ENCODE measurements at regions of chr14 and their contacts with region 1.

Region 1: DNA sequence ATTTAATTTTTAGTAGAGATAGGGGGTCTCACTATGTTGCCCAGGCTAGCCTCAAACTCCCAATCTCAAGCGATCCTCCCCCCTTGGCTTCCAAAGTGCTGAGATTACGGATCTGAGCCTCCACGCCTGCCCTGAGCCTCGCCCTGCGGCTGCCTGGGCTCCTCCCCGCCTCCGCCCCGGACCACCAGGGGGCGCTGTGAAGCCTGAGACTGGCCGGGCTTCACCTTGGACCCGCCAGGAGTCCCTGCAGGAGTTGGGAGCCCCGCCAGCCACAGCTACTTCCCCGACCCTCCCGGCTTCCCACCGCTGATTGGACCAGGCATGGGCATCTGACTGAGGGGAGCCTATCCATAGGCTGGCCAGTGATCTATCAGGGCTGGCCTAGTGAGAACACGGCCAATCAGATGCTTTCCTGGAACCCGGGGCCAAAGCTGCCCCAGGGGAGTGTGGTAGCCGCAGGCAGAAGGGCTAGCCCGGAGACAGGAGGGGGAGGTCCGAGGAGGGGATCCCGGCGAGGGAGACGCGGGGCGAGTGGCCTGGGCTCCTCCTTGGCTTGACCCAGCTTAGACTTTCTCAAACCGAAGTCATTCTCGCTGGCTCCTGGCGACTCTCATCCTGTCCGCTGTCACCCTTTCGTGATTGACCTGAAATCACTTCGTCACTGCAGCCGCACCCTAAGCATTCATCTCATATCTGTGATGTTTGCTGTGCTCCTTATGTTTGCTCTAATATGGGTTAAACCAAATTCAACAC is 15.1 kb upstream of the ANKRD9 start:
- DNase-seq: peak; percentile 95 to 97 (median 96)
- ATAC-seq: peak; percentile 98
- H3K4me3 ChIP-seq: peak overlapping the region; percentile 45
- H3K27ac ChIP-seq: peak overlapping the region; percentile 88
- H3K4me1 ChIP-seq: peaks cover 12 to 37% of the 10 kb centered on the region in 2 experiments; a peak in 4 of 5 replicates
- H3K27me3 ChIP-seq: no peaks in the 10 kb centered on the region
- CTCF ChIP-seq: peak; percentile 89 to 97 (median 92)
- EP300 ChIP-seq: no peak
- POLR2A ChIP-seq: peak; percentile 84
- RAD21 ChIP-seq: peak; percentile 89 to 91

Region 2: DNA sequence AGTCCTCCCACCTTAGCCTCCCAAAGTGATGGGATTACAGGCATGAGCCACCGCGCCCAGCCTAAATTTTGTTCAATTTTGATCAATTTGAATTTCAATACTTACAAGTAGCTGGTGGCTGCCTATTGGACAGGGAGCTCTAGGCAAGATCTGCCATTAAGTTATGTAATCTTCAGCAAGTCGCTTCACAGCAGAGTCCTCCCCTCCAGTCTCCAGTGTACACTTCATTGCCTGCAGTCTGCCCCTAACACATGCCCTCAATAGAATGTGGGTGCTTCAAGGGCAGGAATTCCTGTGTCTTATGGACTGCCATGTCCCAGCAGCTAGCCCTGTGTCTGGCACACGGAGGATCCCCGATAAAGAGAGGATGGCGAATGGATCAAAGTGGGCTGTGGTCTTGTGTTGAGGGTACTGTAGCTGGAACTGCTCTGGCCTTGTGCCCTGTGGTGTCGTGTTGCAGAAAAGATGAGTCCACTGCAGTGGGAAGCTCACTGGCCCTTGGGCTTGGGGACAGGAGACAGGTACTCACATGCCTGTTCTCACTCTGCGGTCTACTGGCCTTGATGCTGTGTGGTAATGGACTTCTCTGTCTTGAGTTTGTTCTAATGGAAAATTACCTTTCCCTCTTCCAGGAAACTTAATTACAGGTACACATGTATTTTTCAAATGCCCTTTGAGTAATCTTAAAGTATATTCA is 94.3 kb before region 1 on chr14:
- CTCF ChIA-PET with region 1: no interaction called
- POLR2A ChIA-PET with region 1: no interaction called
- in situ Hi-C with region 1: no loop called
- intact Hi-C with region 1: no loop called
- DNase-seq: no peak
- ATAC-seq: no peak
- H3K4me3 ChIP-seq: no peak overlapping the region
- H3K27ac ChIP-seq: no peak overlapping the region
- H3K4me1 ChIP-seq: peaks cover 0 to 4% of the 10 kb centered on the region in 2 experiments; a peak in 2 of 5 replicates
- H3K27me3 ChIP-seq: peaks cover 0 to 7% of the 10 kb centered on the region in 2 experiments; a peak in 1 of 5 replicates
- CTCF ChIP-seq: no peak
- EP300 ChIP-seq: no peak
- POLR2A ChIP-seq: no peak
- RAD21 ChIP-seq: no peak

Region 3: DNA sequence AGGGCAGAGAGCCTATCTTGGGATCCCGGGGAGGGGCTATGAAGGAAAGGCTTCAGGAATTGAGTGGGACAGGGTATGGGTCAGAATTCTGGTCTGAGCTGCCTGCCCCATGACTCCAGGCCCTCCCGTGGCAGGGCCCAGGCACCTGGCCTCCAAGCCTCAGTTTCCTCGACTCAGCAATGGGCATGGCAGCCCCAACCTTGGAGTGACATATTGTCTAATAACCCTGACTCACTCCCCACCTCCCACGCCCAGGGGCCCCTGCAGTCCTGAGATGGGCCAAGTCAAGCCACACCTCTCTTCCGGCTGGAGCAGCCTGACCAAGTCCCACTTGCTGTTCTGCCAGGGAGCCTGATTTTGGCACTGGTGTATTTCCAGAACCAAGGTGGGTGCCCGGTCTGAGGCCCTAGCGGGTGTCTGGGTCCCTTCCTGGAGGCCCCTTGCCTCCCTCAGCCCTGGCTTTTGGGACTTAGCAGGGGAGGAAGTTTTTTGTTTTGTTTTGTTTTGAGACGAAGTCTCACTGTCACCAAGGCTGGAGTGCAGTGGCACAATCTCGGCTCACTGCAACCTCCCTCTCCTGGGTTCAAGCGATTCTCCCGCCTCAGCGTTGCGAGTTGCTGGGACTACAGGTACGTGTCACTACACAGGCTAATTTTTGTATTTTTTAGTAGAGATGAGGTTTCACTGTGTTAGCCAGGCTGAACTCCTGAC is 27.5 kb after region 1 on chr14:
- CTCF ChIA-PET with region 1: no interaction called
- POLR2A ChIA-PET with region 1: no interaction called
- in situ Hi-C with region 1: no loop called
- intact Hi-C with region 1: loop called (anchors 1 kb)
- DNase-seq: peak; percentile 77 to 93 (median 84)
- ATAC-seq: peak; percentile 93
- H3K4me3 ChIP-seq: peak overlapping the region; percentile 49
- H3K27ac ChIP-seq: peak overlapping the region; percentile 83
- H3K4me1 ChIP-seq: peaks cover 23 to 24% of the 10 kb centered on the region in 2 experiments
- H3K27me3 ChIP-seq: no peaks in the 10 kb centered on the region
- CTCF ChIP-seq: no peak
- EP300 ChIP-seq: peak; percentile 85
- POLR2A ChIP-seq: peak; percentile 93
- RAD21 ChIP-seq: no peak

Region 4: GRCh38 chr14:102602379-102603292 is 78.0 kb after region 1 on chr14:
- CTCF ChIA-PET with region 1: no interaction called
- POLR2A ChIA-PET with region 1: no interaction called
- in situ Hi-C with region 1: no loop called
- intact Hi-C with region 1: no loop called
- DNase-seq: no peak
- ATAC-seq: no peak
- H3K4me3 ChIP-seq: no peak overlapping the region
- H3K27ac ChIP-seq: no peak overlapping the region; the same call in 2 of the 3 replicates
- H3K4me1 ChIP-seq: peaks cover 4 to 8% of the 10 kb centered on the region in 2 experiments; a peak in 3 of 5 replicates
- H3K27me3 ChIP-seq: no peaks in the 10 kb centered on the region
- CTCF ChIP-seq: no peak
- EP300 ChIP-seq: no peak
- POLR2A ChIP-seq: no peak
- RAD21 ChIP-seq: no peak

Region 5: DNA sequence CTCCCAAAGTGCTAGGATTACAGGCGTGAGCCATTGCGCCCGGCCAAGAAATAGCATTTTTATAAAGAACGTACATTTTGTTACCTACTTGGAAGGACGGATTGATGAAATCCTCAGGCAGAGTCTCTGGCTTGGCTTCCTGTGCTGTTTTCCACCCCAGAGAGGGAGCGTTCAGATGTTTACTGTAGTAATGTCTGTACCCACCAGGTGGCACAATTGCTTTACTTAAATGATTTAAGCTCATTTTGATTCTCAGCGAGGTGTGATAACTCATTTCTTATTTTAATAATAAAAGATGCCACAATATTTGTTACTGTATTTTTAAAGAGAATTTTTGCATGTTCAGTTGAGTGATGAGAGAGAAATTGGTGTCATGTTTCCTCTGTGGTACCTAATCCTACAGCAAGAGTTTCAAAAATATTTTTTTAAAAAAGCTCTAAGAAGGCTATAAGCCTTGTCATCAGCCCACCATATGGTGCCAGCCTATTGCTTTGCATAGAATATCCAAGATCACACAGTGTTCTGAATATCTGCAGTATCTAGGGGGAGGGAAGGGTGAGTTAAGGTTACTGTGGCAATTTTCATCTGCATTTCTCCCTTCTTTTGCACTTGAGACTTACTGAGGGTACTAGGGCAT is 170.0 kb after region 1 on chr14:
- CTCF ChIA-PET with region 1: no interaction called
- POLR2A ChIA-PET with region 1: no interaction called
- in situ Hi-C with region 1: no loop called
- intact Hi-C with region 1: loop called (anchors 10 kb)
- DNase-seq: peak; percentile 54 to 73 (median 55)
- ATAC-seq: peak; percentile 77
- H3K4me3 ChIP-seq: no peak overlapping the region
- H3K27ac ChIP-seq: no peak overlapping the region
- H3K4me1 ChIP-seq: peaks cover 10 to 20% of the 10 kb centered on the region in 2 experiments; a peak in 3 of 5 replicates
- H3K27me3 ChIP-seq: no peaks in the 10 kb centered on the region
- CTCF ChIP-seq: peak; percentile 37 to 63 (median 48); a peak in 5 of 6 replicates
- EP300 ChIP-seq: no peak
- POLR2A ChIP-seq: no peak
- RAD21 ChIP-seq: peak; percentile 48; a peak in 3 of 4 replicates

Region 6: DNA sequence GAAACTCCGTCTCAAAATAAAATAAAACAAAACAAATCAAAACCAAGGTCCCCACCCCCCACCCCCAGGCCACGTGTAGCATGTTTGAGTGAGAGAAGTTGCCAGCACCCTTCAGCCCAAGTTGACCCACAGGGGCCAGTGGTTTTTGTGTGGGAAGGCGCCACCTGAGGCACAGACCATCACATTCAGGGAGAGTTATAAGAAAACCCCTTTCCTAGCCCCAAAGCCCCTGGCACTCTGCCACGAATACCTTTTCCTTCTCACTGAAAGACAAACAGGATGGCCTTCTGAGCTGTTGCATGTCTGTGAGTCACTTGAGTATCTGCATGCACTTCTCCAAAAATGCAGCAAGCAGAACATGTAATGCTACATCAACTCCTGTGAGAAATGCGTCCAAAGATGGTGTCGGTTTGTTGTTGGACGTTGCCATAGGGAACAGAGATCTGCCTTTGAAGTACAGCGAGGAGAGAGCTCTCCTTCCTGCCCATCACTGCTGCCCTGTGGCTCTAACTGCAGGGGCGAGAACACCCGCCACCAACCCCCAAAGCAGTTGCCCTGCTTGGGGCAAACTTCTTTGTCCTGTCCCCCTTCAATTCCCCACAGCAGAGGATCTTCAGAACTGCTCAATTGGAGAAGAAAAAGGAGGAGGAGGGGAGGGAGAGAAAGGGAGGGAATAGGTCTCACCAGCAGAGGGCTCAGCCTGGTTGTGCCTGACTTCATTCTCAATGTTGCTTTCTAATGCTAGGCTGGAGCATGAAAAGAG is 249.9 kb after region 1 on chr14:
- CTCF ChIA-PET with region 1: no interaction called
- POLR2A ChIA-PET with region 1: no interaction called
- in situ Hi-C with region 1: no loop called
- intact Hi-C with region 1: loop called (anchors 5 kb)
- DNase-seq: peak; percentile 29 to 70 (median 49)
- ATAC-seq: peak; percentile 78
- H3K4me3 ChIP-seq: no peak overlapping the region
- H3K27ac ChIP-seq: no peak overlapping the region; the same call in 2 of the 3 replicates
- H3K4me1 ChIP-seq: peaks cover 19 to 37% of the 10 kb centered on the region in 2 experiments; a peak in 4 of 5 replicates
- H3K27me3 ChIP-seq: no peaks in the 10 kb centered on the region
- CTCF ChIP-seq: peak; percentile 57 to 73 (median 72)
- EP300 ChIP-seq: no peak
- POLR2A ChIP-seq: no peak
- RAD21 ChIP-seq: peak; percentile 36 to 56; a peak in 3 of 4 replicates

Region 7: DNA sequence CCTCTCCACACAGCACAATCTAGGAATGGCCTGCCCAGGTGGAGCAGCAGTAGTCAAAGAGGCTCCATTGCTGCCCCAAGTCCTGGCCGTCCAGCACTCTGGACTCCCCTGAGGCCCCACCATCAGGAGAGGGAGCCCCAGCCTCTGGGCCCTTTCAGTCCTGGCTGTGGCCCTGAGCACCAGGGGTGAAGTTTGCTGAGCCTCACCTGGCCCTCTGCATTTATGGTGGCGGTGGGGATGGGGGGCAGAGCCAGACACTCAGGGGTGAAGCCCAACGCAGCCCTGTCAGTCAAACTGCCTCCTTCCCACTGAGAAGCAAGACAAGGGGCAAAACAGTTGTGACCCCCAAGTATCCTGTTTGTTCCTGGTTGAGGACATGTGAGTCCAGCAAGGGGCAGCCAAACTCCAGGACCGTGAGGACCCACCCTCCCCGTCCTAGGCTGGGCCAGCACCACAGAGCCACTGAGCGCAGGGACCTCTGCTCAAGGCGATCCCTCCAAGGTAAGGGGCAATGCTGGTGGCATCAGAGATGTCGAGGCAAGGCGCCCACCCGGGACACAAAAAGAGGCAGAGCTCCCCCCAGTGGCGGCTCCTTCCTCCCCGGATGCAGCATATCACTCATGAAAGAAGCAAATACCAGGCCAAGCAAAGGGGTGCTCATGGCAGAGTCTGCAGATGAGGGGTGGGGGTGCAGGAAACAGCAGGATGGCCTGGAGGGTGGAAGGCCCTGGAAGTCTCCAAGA is 393.0 kb after region 1 on chr14:
- CTCF ChIA-PET with region 1: no interaction called
- POLR2A ChIA-PET with region 1: interaction called, 3 read pairs
- in situ Hi-C with region 1: loop called (anchors 25 kb)
- intact Hi-C with region 1: loop called (anchors 2 kb)
- DNase-seq: peak; percentile 55 to 72 (median 58)
- ATAC-seq: peak; percentile 72
- H3K4me3 ChIP-seq: no peak overlapping the region
- H3K27ac ChIP-seq: no peak overlapping the region
- H3K4me1 ChIP-seq: peaks cover 0 to 16% of the 10 kb centered on the region in 2 experiments; a peak in 2 of 5 replicates
- H3K27me3 ChIP-seq: peaks cover 0 to 8% of the 10 kb centered on the region in 2 experiments; a peak in 1 of 5 replicates
- CTCF ChIP-seq: peak; percentile 68 to 81 (median 69)
- EP300 ChIP-seq: no peak
- POLR2A ChIP-seq: no peak
- RAD21 ChIP-seq: peak; percentile 48 to 82

Measured in K562 (cell line).